Ascending aorta (tissue), 2 donors: ENCODE measurements at regions of chr6 and their contacts with region 1.

Region 1: GRCh38 chr6:142692942-142693341 is 252.0 kb downstream of the HIVEP2 start:
- DNase-seq: peak in 1 of 2 donors; percentile 88
- H3K4me3 ChIP-seq: peak overlapping the region in 1 of 2 donors; percentile 22
- H3K27ac ChIP-seq: peak overlapping the region; percentile 41 to 65
- H3K4me1 ChIP-seq: peaks cover 3 to 37% of the 10 kb centered on the region in 2 donors
- H3K27me3 ChIP-seq: no peaks in the 10 kb centered on the region
- CTCF ChIP-seq: peak; percentile 88 to 94 (median 89)

Region 2: GRCh38 chr6:142429195-142429594 is 263.7 kb before region 1 on chr6:
- intact Hi-C with region 1: no loop called
- DNase-seq: no peak
- H3K4me3 ChIP-seq: no peak overlapping the region
- H3K27ac ChIP-seq: no peak overlapping the region
- H3K4me1 ChIP-seq: no peaks in the 10 kb centered on the region
- H3K27me3 ChIP-seq: no peaks in the 10 kb centered on the region
- CTCF ChIP-seq: no peak

Region 3: DNA sequence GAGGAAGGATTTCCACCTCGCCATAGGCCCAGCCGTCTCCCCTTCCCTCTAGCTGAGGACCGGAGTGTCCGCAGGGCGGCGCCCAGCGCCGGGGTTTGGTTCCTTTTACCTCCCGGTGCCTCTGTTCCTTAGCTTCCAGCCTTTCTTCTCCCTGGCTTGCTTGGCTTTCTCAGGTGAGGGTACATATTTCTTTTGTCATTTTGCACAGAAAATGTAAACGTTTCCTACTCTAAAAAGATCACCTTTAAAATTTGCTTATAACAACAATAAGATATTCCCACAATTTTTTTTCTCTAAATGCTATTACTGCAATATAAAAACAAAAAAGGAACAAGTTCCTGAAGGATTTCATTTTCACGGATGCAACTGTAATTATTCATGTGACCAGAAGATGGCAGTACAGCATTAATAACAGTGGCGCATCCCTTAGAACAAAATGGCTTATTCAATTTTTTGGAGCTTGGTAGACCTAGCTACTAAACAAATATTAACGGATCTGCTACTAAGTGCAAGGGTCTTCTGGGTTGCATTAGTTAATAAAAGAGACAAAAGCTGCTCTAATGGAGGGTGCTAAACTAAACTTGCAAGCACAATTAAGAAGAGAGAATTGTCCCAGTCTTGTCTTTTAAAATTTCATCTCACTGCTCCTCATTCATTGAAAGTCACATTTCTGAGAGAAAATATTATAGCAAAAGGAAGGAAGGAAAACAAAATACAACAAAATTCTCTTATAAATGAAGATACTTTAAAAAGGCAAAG is 218.2 kb before region 1 on chr6:
- intact Hi-C with region 1: loop called (anchors 2 kb)
- DNase-seq: no peak
- H3K4me3 ChIP-seq: no peak overlapping the region
- H3K27ac ChIP-seq: no peak overlapping the region
- H3K4me1 ChIP-seq: no peaks in the 10 kb centered on the region
- H3K27me3 ChIP-seq: no peaks in the 10 kb centered on the region
- CTCF ChIP-seq: peak; percentile 60 to 84 (median 79)

Region 4: DNA sequence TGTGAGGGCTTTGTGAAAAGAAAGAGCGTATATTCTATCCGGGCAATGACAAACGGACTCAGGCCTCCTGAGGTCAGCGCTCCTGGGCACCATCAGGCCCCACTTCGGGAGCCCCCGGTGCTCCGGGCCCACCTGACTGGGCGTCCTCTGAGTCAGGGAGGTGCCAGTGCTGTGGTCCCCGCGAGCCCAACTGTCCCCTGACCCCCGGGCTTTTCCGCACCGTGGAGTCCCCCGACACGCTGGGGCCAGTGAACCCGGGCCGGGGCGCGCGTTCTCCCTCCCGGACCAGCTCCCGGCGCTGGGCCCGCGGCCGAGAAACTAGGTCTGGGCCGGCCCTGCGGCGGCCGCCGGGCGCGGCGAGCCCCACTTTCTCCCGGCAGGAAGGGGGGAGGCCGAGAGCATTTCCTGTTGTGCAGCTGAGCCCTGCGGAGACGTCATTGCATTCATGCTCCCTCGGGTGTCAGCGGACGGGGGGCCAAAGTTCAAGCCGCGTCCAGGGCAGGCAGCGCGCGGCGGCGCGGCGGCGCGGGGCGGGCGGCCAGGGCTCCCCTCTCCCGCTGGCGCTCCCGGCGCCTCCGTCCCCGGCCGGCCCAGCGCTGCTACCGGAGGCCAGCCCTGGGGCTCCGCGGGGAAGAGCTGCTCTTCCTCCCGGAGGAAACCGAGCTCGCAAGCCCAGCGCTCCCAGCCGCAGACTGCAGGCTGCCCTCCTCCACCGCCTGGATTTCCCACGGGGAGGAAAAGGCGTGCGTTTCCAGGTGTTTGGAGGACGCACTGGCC is 233.7 kb after region 1 on chr6:
- intact Hi-C with region 1: loop called (anchors 5 kb)
- DNase-seq: peak in 1 of 2 donors; percentile 88
- H3K4me3 ChIP-seq: peak overlapping the region; percentile 75 to 78
- H3K27ac ChIP-seq: peak overlapping the region; percentile 81 to 88
- H3K4me1 ChIP-seq: peaks cover 0 to 13% of the 10 kb centered on the region in 2 donors
- H3K27me3 ChIP-seq: no peaks in the 10 kb centered on the region
- CTCF ChIP-seq: no peak

Region 5: GRCh38 chr6:143026696-143027449 is 333.9 kb after region 1 on chr6:
- intact Hi-C with region 1: loop called (anchors 1 kb)
- DNase-seq: no peak
- H3K4me3 ChIP-seq: no peak overlapping the region
- H3K27ac ChIP-seq: no peak overlapping the region
- H3K4me1 ChIP-seq: no peaks in the 10 kb centered on the region
- H3K27me3 ChIP-seq: no peaks in the 10 kb centered on the region
- CTCF ChIP-seq: peak; percentile 29 to 61 (median 53)

Region 6: GRCh38 chr6:143136647-143137046 is 443.7 kb after region 1 on chr6:
- intact Hi-C with region 1: loop called (anchors 10 kb)
- DNase-seq: no peak
- H3K4me3 ChIP-seq: no peak overlapping the region
- H3K27ac ChIP-seq: peak overlapping the region; percentile 2 to 41
- H3K4me1 ChIP-seq: peaks cover 3 to 14% of the 10 kb centered on the region in 2 donors
- H3K27me3 ChIP-seq: no peaks in the 10 kb centered on the region
- CTCF ChIP-seq: no peak

Region 7: GRCh38 chr6:143427109-143427817 is 734.3 kb after region 1 on chr6:
- intact Hi-C with region 1: loop called (anchors 1 kb)
- DNase-seq: peak in 1 of 2 donors; percentile 83
- H3K4me3 ChIP-seq: no peak overlapping the region
- H3K27ac ChIP-seq: no peak overlapping the region
- H3K4me1 ChIP-seq: peaks cover 0 to 3% of the 10 kb centered on the region in 2 donors
- H3K27me3 ChIP-seq: no peaks in the 10 kb centered on the region
- CTCF ChIP-seq: peak; percentile 87 to 98 (median 96)

Region 8: GRCh38 chr6:143743301-143744166 is 1050.6 kb after region 1 on chr6:
- intact Hi-C with region 1: no loop called
- DNase-seq: no peak
- H3K4me3 ChIP-seq: peak overlapping the region; percentile 14 to 25
- H3K27ac ChIP-seq: peak overlapping the region; percentile 80 to 86
- H3K4me1 ChIP-seq: peaks cover 9 to 39% of the 10 kb centered on the region in 2 donors
- H3K27me3 ChIP-seq: no peaks in the 10 kb centered on the region
- CTCF ChIP-seq: no peak